ENCODE measurements at regions of chr1 and their contacts with region 1.

Region 1: GRCh38 chr1:117059678-117060440 is at the start of gene TTF2:
- DNase-seq: peak; percentile 98
- ATAC-seq: peak; percentile 98
- H3K4me3 ChIP-seq: peak within 1 kb of the TSS; percentile 64
- H3K27ac ChIP-seq: peak within 1 kb of the TSS; percentile 31; the same call in 1 of the 2 replicates
- H3K4me1 ChIP-seq: no peaks in the 10 kb centered on the region; the same call in 1 of the 2 replicates
- H3K27me3 ChIP-seq: no peaks in the 10 kb centered on the region
- CTCF ChIP-seq: no peak
- POLR2A ChIP-seq: peak; percentile 71; the same call in 1 of the 2 replicates
- RAD21 ChIP-seq: no peak
- total RNA-seq, gene TTF2: 12.5 and 14.7 TPM in 2 replicates

Region 2: DNA sequence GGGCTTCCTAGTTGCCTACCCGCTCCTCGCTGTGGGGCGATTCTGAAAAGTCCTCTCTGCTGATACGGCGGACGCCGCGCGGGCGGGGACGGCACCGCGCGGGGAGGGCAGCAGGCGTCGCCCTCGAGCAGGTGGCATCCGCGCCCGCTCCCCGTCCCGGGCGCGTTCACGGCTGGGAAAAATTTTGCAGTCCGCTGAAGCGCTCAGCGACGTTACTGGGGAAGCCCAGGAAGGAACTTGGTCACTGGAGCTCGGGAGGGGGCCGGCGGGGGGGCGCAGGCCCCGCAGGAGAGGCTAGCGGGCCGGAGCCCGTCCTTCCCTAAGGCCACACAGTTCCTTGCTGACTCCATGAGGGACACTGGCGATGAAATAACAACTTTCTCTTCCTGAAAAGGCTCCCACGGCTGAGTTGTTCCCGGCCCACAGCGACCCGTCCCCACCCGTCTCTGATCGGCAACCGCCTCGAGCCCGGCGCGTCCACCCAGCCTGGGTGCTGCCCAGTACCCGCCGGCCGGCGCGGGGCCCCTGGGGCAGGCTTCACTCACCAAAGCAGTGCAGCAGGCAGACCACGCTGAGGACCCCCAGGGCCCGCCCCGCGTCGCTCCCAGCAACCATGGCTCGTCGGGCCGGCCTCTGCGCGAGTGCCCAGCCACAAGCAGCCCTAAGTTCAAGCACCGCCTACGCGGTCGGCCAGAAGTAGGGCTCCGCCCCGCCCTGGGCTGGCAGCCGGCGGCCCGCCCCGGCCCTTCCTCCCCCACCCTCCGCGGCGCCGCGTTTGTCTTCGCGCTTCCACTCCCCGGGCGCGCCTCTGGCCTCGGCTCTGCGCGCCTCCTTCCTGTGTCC is 489.3 kb before region 1 on chr1 and contains the start of gene CD58:
- CTCF ChIA-PET with region 1: interaction called, 3 read pairs
- POLR2A ChIA-PET with region 1: no interaction called
- dilution Hi-C with region 1: no loop called
- in situ Hi-C with region 1: no loop called
- intact Hi-C with region 1: loop called (anchors 1 kb)
- DNase-seq: peak; percentile 63
- ATAC-seq: peak; percentile 95
- H3K4me3 ChIP-seq: peak within 1 kb of the TSS; percentile 80
- H3K27ac ChIP-seq: peak within 1 kb of the TSS; percentile 23; the same call in 1 of the 2 replicates
- H3K4me1 ChIP-seq: peaks cover 2% of the 10 kb centered on the region; the same call in 1 of the 2 replicates
- H3K27me3 ChIP-seq: peaks cover 10% of the 10 kb centered on the region
- CTCF ChIP-seq: peak; percentile 63
- POLR2A ChIP-seq: no peak; the same call in 1 of the 2 replicates
- RAD21 ChIP-seq: peak; percentile 27; the same call in 1 of the 2 replicates
- total RNA-seq, gene CD58: 5.4 and 6.4 TPM in 2 replicates

Region 3: DNA sequence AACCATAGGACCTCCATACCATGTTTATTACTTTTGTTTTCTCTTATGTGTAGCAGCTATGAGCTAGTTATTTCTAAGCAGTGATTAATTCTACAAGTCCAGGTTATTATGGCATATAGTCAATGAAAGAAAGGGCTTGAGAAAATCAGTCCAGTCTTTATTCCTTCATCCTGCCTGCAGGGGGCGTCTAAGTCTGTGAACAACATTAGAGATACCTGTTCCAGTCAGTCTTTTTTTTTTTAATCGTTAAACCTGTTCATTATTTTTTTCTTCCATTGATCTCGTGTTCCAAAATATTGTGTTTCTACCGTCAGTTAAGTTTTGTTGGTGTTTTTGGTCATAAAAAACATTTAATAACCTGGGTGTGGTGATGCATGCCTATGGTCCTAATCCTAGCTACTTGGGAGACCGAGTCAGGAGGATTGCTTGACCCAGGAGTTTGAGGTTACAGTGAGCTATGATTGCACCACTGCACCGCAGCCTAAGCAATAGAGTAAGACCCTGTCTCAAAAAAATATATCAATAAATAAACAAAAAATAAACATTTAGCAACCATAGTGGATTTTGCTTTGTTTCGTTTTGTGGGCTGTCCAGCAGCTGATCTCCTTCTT is 335.0 kb before region 1 on chr1:
- CTCF ChIA-PET with region 1: no interaction called
- POLR2A ChIA-PET with region 1: no interaction called
- dilution Hi-C with region 1: no loop called
- in situ Hi-C with region 1: no loop called
- intact Hi-C with region 1: loop called (anchors 1 kb)
- DNase-seq: peak; percentile 52
- ATAC-seq: peak; percentile 64
- H3K4me3 ChIP-seq: no peak overlapping the region
- H3K27ac ChIP-seq: no peak overlapping the region
- H3K4me1 ChIP-seq: no peaks in the 10 kb centered on the region
- H3K27me3 ChIP-seq: peaks cover 1% of the 10 kb centered on the region; the same call in 1 of the 2 replicates
- CTCF ChIP-seq: peak; percentile 67
- POLR2A ChIP-seq: no peak
- RAD21 ChIP-seq: peak; percentile 51

Region 4: GRCh38 chr1:116737020-116737854 is 322.6 kb before region 1 on chr1:
- CTCF ChIA-PET with region 1: interaction called, 4 read pairs
- POLR2A ChIA-PET with region 1: no interaction called
- dilution Hi-C with region 1: no loop called
- in situ Hi-C with region 1: no loop called
- intact Hi-C with region 1: loop called (anchors 1 kb)
- DNase-seq: peak; percentile 35
- ATAC-seq: peak; percentile 80
- H3K4me3 ChIP-seq: no peak overlapping the region
- H3K27ac ChIP-seq: no peak overlapping the region
- H3K4me1 ChIP-seq: no peaks in the 10 kb centered on the region
- H3K27me3 ChIP-seq: no peaks in the 10 kb centered on the region
- CTCF ChIP-seq: peak; percentile 75
- POLR2A ChIP-seq: no peak
- RAD21 ChIP-seq: peak; percentile 71

Region 5: GRCh38 chr1:116847688-116848531 is 211.9 kb before region 1 on chr1:
- CTCF ChIA-PET with region 1: no interaction called
- POLR2A ChIA-PET with region 1: no interaction called
- dilution Hi-C with region 1: no loop called
- in situ Hi-C with region 1: no loop called
- intact Hi-C with region 1: loop called (anchors 10 kb)
- DNase-seq: peak; percentile 33
- ATAC-seq: no peak
- H3K4me3 ChIP-seq: no peak overlapping the region
- H3K27ac ChIP-seq: no peak overlapping the region
- H3K4me1 ChIP-seq: no peaks in the 10 kb centered on the region
- H3K27me3 ChIP-seq: no peaks in the 10 kb centered on the region
- CTCF ChIP-seq: no peak
- POLR2A ChIP-seq: no peak
- RAD21 ChIP-seq: no peak

Region 6: DNA sequence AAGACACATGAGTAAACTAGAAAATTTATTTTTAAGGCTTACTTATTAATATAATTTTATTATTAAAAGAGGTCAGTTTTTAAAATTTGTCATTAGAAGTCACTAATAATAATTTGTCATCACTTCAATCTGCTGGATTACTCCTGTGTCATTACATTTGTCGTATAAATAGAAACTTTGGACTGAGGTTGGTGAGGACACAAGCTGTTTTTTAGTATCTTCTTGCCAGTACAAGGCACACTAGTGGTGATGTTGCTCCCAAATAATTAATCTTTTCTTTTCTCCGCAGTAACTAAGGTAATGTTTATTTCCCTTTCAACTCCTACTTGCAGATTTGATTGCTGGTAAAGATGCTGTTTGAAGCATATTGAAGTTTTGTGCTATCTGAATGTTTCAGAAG is 486.6 kb after region 1 on chr1:
- CTCF ChIA-PET with region 1: no interaction called
- POLR2A ChIA-PET with region 1: no interaction called
- dilution Hi-C with region 1: no loop called
- in situ Hi-C with region 1: no loop called
- intact Hi-C with region 1: no loop called
- DNase-seq: no peak
- ATAC-seq: no peak
- H3K4me3 ChIP-seq: no peak overlapping the region
- H3K27ac ChIP-seq: no peak overlapping the region
- H3K4me1 ChIP-seq: peaks cover 3% of the 10 kb centered on the region; the same call in 1 of the 2 replicates
- H3K27me3 ChIP-seq: no peaks in the 10 kb centered on the region
- CTCF ChIP-seq: no peak
- POLR2A ChIP-seq: no peak
- RAD21 ChIP-seq: no peak

Region 7: GRCh38 chr1:117929173-117929989 is 869.5 kb after region 1 on chr1 and contains the starts of genes GDAP2 and WDR3:
- CTCF ChIA-PET with region 1: no interaction called
- POLR2A ChIA-PET with region 1: no interaction called
- dilution Hi-C with region 1: no loop called
- in situ Hi-C with region 1: no loop called
- intact Hi-C with region 1: loop called (anchors 10 kb)
- DNase-seq: peak; percentile 96
- ATAC-seq: peak; percentile 89
- H3K4me3 ChIP-seq: peak within 1 kb of the TSS; percentile 89
- H3K27ac ChIP-seq: peak within 1 kb of the TSS; percentile 79
- H3K4me1 ChIP-seq: 0 out of 2 replicates have a peak, but pooled peaks cover 3% of the 10 kb centered on the region
- H3K27me3 ChIP-seq: no peaks in the 10 kb centered on the region
- CTCF ChIP-seq: no peak
- POLR2A ChIP-seq: 0 out of 2 replicates have a peak, but pooled peaks have one; percentile 49
- RAD21 ChIP-seq: no peak
- total RNA-seq, gene GDAP2: 26.7 and 27.1 TPM in 2 replicates
- total RNA-seq, gene WDR3: 74.7 and 88.5 TPM in 2 replicates

Measured in IMR-90 (cell line).